Activated B cell treated with CpG ODN at 0.5 μM for 24 hours (primary cell): ENCODE measurements at regions of chr1 and their contacts with region 1.

Region 1: GRCh38 chr1:150259758-150260669 is 2.4 kb downstream of the CA14 start:
- DNase-seq: no peak
- ATAC-seq: no peak
- H3K4me3 Mint-ChIP-seq: no peak overlapping the region
- H3K27ac Mint-ChIP-seq: no peak overlapping the region
- H3K4me1 Mint-ChIP-seq: peaks cover 17% of the 10 kb centered on the region
- H3K27me3 Mint-ChIP-seq: peaks cover 33% of the 10 kb centered on the region
- CTCF ChIP-seq: no peak

Region 2: DNA sequence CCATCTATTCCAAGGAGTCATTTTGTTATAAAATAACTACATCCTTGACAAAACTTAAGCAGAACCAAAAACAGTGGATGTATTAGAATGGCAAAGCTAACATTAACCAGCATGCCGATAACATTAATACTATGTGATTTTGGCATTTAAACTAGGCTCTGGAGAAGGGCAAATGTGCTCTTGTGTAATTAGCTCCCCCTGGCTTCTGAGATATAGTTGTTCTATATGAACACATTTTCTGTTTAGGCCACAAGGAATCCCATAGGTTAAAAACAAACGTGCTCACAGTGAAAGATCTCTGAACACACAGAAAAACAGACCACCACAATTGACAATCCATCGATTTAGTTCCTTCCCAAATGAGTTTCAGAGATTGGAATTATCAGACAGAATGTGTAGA is 169.8 kb after region 1 on chr1:
- CTCF ChIA-PET with region 1: interaction called, 14 read pairs
- POLR2A ChIA-PET with region 1: no interaction called
- intact Hi-C with region 1: no loop called
- DNase-seq: no peak
- ATAC-seq: no peak
- H3K4me3 Mint-ChIP-seq: no peak overlapping the region
- H3K27ac Mint-ChIP-seq: no peak overlapping the region
- H3K4me1 Mint-ChIP-seq: peaks cover 2% of the 10 kb centered on the region
- H3K27me3 Mint-ChIP-seq: no peaks in the 10 kb centered on the region
- CTCF ChIP-seq: no peak